BJ (cell line): ENCODE measurements at regions of chr15 and their contacts with region 1.

Region 1: DNA sequence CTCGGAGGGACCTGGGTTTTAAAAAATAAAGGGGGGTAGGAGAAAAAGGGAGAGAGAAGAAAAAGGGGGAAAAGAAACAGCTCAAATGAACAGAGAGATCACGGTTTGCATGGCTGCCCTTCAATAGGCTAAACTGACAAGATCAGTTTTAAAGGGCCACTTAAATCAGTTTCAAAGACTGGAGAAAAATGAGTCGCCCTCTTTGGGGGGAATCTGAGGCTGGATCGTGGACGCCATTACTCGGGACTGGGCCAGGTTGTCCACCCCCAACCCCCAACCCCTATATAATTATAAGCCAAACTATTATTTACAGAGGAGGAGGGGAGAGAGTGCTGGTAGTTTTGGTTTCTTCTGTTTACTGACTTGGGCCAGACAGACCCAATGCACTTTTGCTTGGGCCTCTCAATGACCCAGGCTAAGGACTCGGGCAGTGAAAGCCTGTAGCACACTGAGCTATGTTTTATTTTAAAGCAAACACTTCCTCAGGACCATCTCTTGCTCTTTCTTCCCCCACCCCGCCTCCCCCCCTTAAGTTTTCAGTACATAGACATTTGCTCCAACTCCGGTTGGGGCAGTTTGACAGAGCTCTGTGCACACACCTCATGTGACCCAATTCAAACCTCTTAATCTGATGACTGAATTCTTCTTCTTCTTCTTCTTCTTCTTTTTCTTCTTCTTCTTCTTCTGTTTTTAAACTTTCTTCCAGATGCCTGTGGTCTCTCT is 6.3 kb downstream of the NR2F2 start:
- DNase-seq: no peak
- H3K4me3 ChIP-seq: peak overlapping the region; percentile 66
- H3K27me3 ChIP-seq: no peaks in the 10 kb centered on the region
- CTCF ChIP-seq: no peak

Region 2: DNA sequence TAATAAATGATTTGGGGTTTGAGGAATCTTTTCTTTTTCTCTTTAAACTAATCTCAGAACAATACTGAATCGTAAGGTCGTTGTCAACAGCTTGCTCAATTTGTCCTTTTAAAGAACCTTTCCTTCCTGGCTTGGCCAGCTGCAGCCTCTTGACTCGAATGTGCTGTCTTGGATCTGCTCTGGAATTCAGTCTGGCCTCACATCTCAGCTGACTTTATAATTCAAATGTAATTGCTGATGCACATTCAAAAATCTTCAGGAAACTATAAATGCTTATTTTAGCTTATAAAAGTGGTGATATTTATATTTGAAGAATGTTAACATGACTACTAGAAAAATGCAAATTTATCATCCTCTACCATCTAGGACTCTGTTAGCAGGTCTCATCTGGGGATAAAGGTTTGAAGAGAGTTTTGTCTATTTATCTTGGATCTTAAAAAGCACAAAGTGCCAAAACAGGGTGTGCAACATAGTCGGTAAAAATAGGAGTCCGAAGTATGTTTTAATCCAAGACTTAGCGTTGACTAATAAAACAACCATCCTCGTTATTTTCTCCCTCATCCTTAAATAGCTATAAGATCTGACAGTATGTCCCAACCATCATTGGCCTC is 1070.2 kb before region 1 on chr15:
- CTCF ChIA-PET with region 1: no interaction called
- POLR2A ChIA-PET with region 1: interaction called, 37 read pairs
- DNase-seq: peak; percentile 90
- H3K4me3 ChIP-seq: no peak overlapping the region
- H3K27me3 ChIP-seq: no peaks in the 10 kb centered on the region
- CTCF ChIP-seq: no peak

Region 3: GRCh38 chr15:95511671-95512070 is 825.1 kb before region 1 on chr15:
- CTCF ChIA-PET with region 1: no interaction called
- POLR2A ChIA-PET with region 1: interaction called, 15 read pairs
- DNase-seq: peak; percentile 30
- H3K4me3 ChIP-seq: no peak overlapping the region
- H3K27me3 ChIP-seq: no peaks in the 10 kb centered on the region
- CTCF ChIP-seq: no peak

Region 4: GRCh38 chr15:96285305-96285704 is 51.5 kb before region 1 on chr15:
- CTCF ChIA-PET with region 1: no interaction called
- POLR2A ChIA-PET with region 1: interaction called, 17 read pairs
- DNase-seq: peak; percentile 81
- H3K4me3 ChIP-seq: peak overlapping the region; percentile 11; the same call in 1 of the 2 replicates
- H3K27me3 ChIP-seq: no peaks in the 10 kb centered on the region
- CTCF ChIP-seq: no peak

Region 5: GRCh38 chr15:96321639-96322535 is 14.9 kb before region 1 on chr15:
- CTCF ChIA-PET with region 1: interaction called, 12 read pairs
- POLR2A ChIA-PET with region 1: interaction called, 16 read pairs
- DNase-seq: no peak
- H3K4me3 ChIP-seq: peak overlapping the region; percentile 24
- H3K27me3 ChIP-seq: no peaks in the 10 kb centered on the region
- CTCF ChIP-seq: 0 out of 2 replicates have a peak, but pooled peaks have one; percentile 22

Region 6: GRCh38 chr15:96670389-96670788 is 333.6 kb after region 1 on chr15:
- CTCF ChIA-PET with region 1: no interaction called
- POLR2A ChIA-PET with region 1: no interaction called
- DNase-seq: no peak
- H3K4me3 ChIP-seq: no peak overlapping the region
- H3K27me3 ChIP-seq: no peaks in the 10 kb centered on the region
- CTCF ChIP-seq: no peak